ENCODE measurements at regions of chr1 and their contacts with region 1.

Region 1: DNA sequence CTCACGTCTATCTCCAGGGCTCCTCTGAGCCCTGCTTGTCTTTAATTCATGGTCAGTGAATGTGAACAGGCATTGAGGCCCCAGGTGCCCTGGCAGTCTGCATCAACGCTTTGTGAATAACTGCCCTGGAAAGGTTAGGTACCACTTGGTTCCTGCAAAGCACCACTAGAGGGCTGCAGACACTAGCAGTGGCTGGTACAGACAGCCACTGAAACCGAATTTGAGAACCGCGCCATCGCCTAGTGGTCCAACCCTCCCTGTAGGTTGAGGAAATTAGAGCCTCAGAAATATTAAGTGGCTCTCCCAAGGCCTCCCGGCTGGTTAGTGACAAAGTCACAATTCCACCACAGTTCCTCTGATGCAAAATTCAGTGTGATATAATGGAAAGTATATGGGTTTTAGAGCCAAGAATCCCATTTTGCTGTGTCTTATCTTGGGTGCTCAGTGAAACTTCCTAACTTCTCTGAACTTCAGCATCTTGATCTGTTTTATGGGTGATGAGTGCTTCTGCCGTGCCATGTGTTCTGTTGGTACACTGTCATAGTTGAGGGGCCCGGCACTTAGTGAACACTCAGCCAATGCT is 46.2 kb upstream of the BCL9 start:
- DNase-seq: peak; percentile 90
- H3K4me3 Mint-ChIP-seq: no peak overlapping the region
- H3K27ac Mint-ChIP-seq: no peak overlapping the region
- H3K4me1 Mint-ChIP-seq: peaks cover 5% of the 10 kb centered on the region
- H3K27me3 Mint-ChIP-seq: peaks cover 22% of the 10 kb centered on the region

Region 2: GRCh38 chr1:147472966-147473734 is 21.9 kb before region 1 on chr1:
- intact Hi-C with region 1: no loop called
- DNase-seq: no peak
- H3K4me3 Mint-ChIP-seq: no peak overlapping the region
- H3K27ac Mint-ChIP-seq: no peak overlapping the region
- H3K4me1 Mint-ChIP-seq: no peaks in the 10 kb centered on the region
- H3K27me3 Mint-ChIP-seq: peaks cover 8% of the 10 kb centered on the region

Region 3: GRCh38 chr1:147539112-147539575 is 44.1 kb after region 1 on chr1:
- intact Hi-C with region 1: loop called (anchors 5 kb)
- DNase-seq: no peak
- H3K4me3 Mint-ChIP-seq: no peak overlapping the region
- H3K27ac Mint-ChIP-seq: no peak overlapping the region
- H3K4me1 Mint-ChIP-seq: peaks cover 29% of the 10 kb centered on the region
- H3K27me3 Mint-ChIP-seq: peaks cover 5% of the 10 kb centered on the region

Region 4: DNA sequence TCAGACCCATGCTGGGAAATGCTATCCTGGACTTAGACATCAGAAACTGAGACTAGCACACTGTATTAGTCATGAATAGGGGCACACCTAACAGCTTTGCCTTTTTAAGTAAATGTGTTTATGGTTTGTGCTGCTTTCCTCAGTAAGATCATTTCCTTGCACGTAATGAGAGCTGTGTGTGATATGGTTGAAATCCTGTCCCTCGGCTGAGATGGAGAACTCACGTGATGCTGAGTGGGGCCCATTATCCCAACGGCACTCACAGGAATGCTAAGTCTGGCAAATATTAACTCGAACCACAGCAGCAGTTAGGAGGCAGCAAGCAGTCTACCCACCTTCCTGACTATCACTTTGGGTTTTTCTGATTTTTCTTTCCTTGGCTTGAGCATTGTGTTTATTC is 84.4 kb after region 1 on chr1:
- intact Hi-C with region 1: loop called (anchors 5 kb)
- DNase-seq: no peak
- H3K4me3 Mint-ChIP-seq: peak overlapping the region; percentile 38
- H3K27ac Mint-ChIP-seq: peak overlapping the region; percentile 63
- H3K4me1 Mint-ChIP-seq: peaks cover 18% of the 10 kb centered on the region
- H3K27me3 Mint-ChIP-seq: peaks cover 45% of the 10 kb centered on the region

Region 5: GRCh38 chr1:147627435-147628110 is 132.5 kb after region 1 on chr1:
- intact Hi-C with region 1: loop called (anchors 1 kb)
- DNase-seq: peak; percentile 84
- H3K4me3 Mint-ChIP-seq: no peak overlapping the region
- H3K27ac Mint-ChIP-seq: no peak overlapping the region
- H3K4me1 Mint-ChIP-seq: peaks cover 26% of the 10 kb centered on the region
- H3K27me3 Mint-ChIP-seq: no peaks in the 10 kb centered on the region

Region 6: DNA sequence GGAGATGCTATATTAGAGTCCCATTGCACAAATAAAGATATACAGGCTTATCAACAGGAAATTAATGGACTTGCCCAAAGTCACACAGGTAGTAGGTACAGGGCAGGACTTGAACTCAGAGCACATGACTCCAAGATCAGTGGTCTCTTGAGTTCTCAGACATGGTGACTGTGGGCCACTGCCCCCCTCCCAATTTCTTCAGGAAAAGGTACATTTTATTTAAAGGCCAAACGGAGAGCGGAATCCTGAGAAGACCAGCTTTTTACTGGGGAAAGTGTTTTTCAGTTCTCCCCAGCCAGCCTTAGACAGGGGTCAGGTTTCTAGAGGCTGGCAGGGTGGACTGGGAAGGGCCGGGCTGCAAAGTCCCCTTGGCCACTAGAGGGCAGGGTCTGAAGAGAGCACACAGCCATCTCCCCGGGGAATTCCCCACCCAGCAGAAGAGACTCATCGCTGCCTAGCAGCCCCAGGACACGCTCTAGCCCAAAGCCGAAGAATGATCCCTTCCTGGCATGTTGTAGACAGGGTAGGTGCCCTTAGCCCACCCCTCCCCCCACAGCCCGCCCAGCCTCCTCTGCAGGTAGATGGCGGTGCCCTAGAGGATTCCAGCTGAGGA is 145.6 kb after region 1 on chr1:
- intact Hi-C with region 1: loop called (anchors 1 kb)
- DNase-seq: peak; percentile 93
- H3K4me3 Mint-ChIP-seq: no peak overlapping the region
- H3K27ac Mint-ChIP-seq: no peak overlapping the region
- H3K4me1 Mint-ChIP-seq: peaks cover 41% of the 10 kb centered on the region
- H3K27me3 Mint-ChIP-seq: no peaks in the 10 kb centered on the region

Region 7: DNA sequence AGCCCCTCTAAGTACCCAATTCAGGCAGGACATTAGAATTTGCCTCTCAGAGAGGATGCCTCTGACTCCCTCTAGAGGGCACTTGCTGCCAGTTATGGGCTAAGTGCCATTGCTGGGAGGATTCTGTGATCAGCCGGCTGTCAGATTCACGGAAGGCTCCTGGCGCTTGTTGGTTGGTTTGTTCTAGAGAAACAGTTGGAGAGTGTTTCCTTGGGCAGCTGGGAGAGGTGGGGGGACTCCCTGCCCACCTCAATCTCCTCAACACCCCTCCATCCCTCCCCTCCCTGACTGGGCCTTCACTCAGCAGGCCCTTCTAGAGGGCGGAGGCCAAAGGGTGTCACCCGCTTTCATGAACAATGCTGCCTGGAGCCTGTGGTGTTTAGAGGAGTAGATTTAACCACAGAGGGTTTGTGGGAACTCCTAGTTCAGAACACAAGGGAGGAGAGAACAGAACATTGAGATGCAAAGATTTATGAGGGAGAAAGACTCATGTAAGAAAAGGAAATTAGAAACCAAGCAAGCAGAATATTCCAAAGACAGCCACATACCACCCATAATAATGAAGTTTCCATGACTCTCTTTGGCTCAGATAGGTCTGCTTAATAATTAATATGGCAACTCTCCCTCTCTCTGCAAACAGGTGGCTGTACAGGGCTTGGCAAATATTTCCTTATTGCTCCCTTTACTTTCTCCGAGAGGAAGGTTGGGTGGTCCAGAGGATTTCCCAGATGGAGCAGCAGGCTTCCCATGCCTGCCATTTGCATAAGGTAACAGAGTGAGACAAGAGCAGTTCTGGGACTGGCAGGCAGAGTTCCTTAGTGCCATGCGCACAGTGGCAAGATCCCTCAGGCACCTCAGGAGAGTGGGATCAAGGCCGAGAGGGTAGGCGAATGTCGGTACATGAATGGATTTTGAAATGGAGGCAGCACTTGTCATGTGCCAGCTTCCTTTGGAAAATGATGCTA is 205.2 kb after region 1 on chr1:
- intact Hi-C with region 1: loop called (anchors 2 kb)
- DNase-seq: peak; percentile 88
- H3K4me3 Mint-ChIP-seq: no peak overlapping the region
- H3K27ac Mint-ChIP-seq: no peak overlapping the region
- H3K4me1 Mint-ChIP-seq: peaks cover 7% of the 10 kb centered on the region
- H3K27me3 Mint-ChIP-seq: peaks cover 34% of the 10 kb centered on the region

Region 8: DNA sequence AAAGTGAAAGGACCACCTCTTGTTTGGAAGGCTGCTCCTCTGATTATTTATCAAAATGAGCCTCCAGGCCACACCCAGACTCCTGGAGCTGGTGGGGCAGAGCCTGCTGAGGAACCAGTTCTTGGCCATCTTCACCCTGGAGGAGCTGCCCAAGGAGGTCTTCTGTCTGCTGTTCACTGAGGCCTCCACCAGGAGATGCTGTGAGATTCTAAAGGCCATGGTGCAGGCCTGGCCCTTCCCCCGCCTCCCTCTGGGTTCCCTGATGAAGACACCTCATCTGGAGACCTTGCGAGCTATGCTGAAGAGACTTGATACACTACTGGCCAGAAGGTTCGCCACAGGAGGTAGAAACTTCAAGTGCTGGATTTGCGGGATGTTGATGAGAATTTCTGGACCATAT is 345.8 kb after region 1 on chr1:
- intact Hi-C with region 1: no loop called
- DNase-seq: no peak
- H3K4me3 Mint-ChIP-seq: no peak overlapping the region
- H3K27ac Mint-ChIP-seq: no peak overlapping the region
- H3K4me1 Mint-ChIP-seq: no peaks in the 10 kb centered on the region
- H3K27me3 Mint-ChIP-seq: peaks cover 5% of the 10 kb centered on the region

Region 9: GRCh38 chr1:147890177-147890790 is 395.2 kb after region 1 on chr1:
- intact Hi-C with region 1: loop called (anchors 1 kb)
- DNase-seq: peak; percentile 88
- H3K4me3 Mint-ChIP-seq: no peak overlapping the region
- H3K27ac Mint-ChIP-seq: no peak overlapping the region
- H3K4me1 Mint-ChIP-seq: peaks cover 4% of the 10 kb centered on the region
- H3K27me3 Mint-ChIP-seq: peaks cover 14% of the 10 kb centered on the region